HEK293 (cell line): ENCODE measurements at regions of chr7 and their contacts with region 1.

Region 1: DNA sequence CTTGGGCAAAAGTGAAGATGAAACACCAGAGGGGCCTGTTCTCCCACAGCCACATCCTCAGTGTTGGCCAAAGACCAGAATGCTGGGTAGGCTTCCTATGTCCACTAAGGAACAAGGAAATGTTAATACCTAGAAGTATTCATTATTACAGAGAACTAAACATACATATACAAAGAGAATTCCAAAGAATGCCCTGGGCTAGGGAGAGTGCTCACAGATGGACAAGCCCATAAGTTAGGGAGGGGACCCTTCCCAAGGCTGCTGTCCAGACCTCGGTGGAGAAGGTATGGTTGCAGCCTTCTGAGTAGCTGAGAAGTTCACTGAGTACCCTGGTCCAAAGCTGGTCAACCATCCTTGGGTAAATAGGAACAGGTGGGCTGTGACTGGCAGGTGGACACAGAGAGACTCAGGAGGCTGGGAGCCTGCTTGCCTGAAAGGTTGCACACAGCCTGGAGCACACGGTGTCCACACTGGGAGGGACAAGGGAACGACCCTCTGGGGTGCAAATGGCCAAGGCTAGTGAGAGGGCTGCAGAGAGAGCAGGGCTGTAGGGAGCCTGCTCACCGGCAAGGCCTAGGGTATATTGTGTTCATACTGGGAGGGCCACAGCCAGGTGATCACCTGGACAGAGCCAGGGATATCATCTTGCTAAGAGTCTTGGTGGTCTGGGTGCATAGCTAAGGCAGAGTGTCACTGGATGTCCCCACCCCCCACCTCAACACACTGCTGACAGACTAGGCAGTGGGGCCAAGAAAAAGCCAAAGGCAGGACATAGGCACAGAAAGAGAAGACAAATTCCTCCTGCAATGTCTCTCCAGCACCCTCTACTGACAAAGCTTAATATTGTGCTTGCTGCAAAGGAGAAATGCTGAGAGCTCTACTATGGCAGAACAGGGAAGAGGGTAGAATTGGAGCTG is 40.3 kb downstream of the CPVL start:
- H3K4me3 ChIP-seq: no peak overlapping the region
- H3K27ac ChIP-seq: no peak overlapping the region
- H3K4me1 ChIP-seq: no peaks in the 10 kb centered on the region
- CTCF ChIP-seq: peak; percentile 64

Region 2: DNA sequence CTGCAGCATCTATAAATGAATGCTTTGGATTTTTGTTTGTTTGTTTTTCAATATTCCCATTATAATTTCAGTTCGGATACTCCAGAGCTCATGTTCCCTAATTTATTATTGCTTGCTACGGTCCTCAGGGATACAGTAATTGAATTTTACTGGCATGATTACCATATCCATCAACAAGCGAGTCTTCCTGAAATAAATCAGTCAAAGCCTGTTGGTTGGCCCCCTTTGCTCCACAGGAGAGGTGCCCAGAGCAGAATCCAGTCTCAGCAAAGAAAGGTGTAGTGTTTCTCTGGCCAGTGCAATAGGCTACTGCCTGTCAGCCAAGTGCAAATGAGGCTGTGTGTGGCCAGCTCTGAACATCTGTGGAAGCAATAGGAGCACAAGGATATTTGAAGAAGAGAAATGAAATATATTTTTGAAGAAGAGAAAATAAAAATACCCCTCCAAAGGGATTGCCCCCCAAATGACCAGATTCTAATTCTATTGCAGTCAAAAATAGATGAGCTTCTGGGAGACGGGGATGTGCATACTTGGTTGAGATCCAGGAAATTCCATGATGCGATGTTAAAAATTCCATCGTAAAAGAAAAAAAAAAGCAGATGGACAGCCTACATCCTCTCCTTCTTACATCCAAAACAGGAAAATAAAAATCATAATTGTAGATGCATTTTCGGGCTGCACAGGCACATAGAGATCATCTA is 166.0 kb before region 1 on chr7:
- CTCF ChIA-PET with region 1: interaction called, 10 read pairs
- POLR2A ChIA-PET with region 1: no interaction called
- H3K4me3 ChIP-seq: no peak overlapping the region
- H3K27ac ChIP-seq: no peak overlapping the region; the same call in 1 of the 2 replicates
- H3K4me1 ChIP-seq: peaks cover 12% of the 10 kb centered on the region; the same call in 1 of the 2 replicates
- CTCF ChIP-seq: no peak

Region 3: GRCh38 chr7:29077176-29077575 is 28.8 kb before region 1 on chr7:
- CTCF ChIA-PET with region 1: interaction called, 14 read pairs
- POLR2A ChIA-PET with region 1: no interaction called
- H3K4me3 ChIP-seq: no peak overlapping the region
- H3K27ac ChIP-seq: no peak overlapping the region
- H3K4me1 ChIP-seq: no peaks in the 10 kb centered on the region
- CTCF ChIP-seq: no peak

Region 4: GRCh38 chr7:29408841-29409243 is 302.8 kb after region 1 on chr7:
- CTCF ChIA-PET with region 1: interaction called, 11 read pairs
- POLR2A ChIA-PET with region 1: no interaction called
- H3K4me3 ChIP-seq: no peak overlapping the region
- H3K27ac ChIP-seq: no peak overlapping the region
- H3K4me1 ChIP-seq: no peaks in the 10 kb centered on the region
- CTCF ChIP-seq: peak; percentile 29; the same call in 1 of the 2 replicates